ENCODE measurements at regions of chr1 and their contacts with region 1.

Region 1: GRCh38 chr1:198359024-198359653 is 181.3 kb downstream of the ATP6V1G3 start:
- DNase-seq: no peak
- H3K4me3 ChIP-seq: no peak overlapping the region
- H3K27ac ChIP-seq: no peak overlapping the region
- H3K4me1 ChIP-seq: no peaks in the 10 kb centered on the region
- H3K27me3 ChIP-seq: no peaks in the 10 kb centered on the region
- CTCF ChIP-seq: peak in 1 of 3 experiments; percentile 20; a peak in 2 of 4 replicates
- EP300 ChIP-seq: no peak
- POLR2A ChIP-seq: no peak
- RAD21 ChIP-seq: peak in 1 of 2 experiments; percentile 36; a peak in 1 of 4 replicates

Region 2: GRCh38 chr1:198346178-198346577 is 13.0 kb before region 1 on chr1:
- CTCF ChIA-PET with region 1: interaction called, 20 read pairs
- POLR2A ChIA-PET with region 1: no interaction called
- DNase-seq: no peak
- H3K4me3 ChIP-seq: no peak overlapping the region
- H3K27ac ChIP-seq: no peak overlapping the region
- H3K4me1 ChIP-seq: no peaks in the 10 kb centered on the region; a peak in 1 of 7 replicates
- H3K27me3 ChIP-seq: no peaks in the 10 kb centered on the region
- CTCF ChIP-seq: no peak
- EP300 ChIP-seq: no peak
- POLR2A ChIP-seq: no peak
- RAD21 ChIP-seq: no peak

Region 3: GRCh38 chr1:198416296-198416695 is 57.2 kb after region 1 on chr1:
- CTCF ChIA-PET with region 1: no interaction called
- POLR2A ChIA-PET with region 1: no interaction called
- DNase-seq: no peak
- H3K4me3 ChIP-seq: no peak overlapping the region
- H3K27ac ChIP-seq: no peak overlapping the region
- H3K4me1 ChIP-seq: no peaks in the 10 kb centered on the region
- H3K27me3 ChIP-seq: no peaks in the 10 kb centered on the region
- CTCF ChIP-seq: no peak
- EP300 ChIP-seq: no peak
- POLR2A ChIP-seq: no peak
- RAD21 ChIP-seq: no peak